ENCODE measurements at regions of chr7 and their contacts with region 1.

Region 1: GRCh38 chr7:38107486-38107893 is 70.6 kb upstream of the STARD3NL start:
- DNase-seq: no peak
- H3K4me3 ChIP-seq: no peak overlapping the region
- H3K27ac ChIP-seq: no peak overlapping the region
- H3K4me1 ChIP-seq: no peaks in the 10 kb centered on the region
- H3K27me3 ChIP-seq: no peaks in the 10 kb centered on the region
- CTCF ChIP-seq: peak; percentile 27 to 81 (median 63)
- POLR2A ChIP-seq: no peak

Region 2: GRCh38 chr7:37901236-37901827 is 206.2 kb before region 1 on chr7:
- intact Hi-C with region 1: loop called (anchors 5 kb)
- DNase-seq: no peak
- H3K4me3 ChIP-seq: no peak overlapping the region
- H3K27ac ChIP-seq: no peak overlapping the region
- H3K4me1 ChIP-seq: peaks cover 0 to 14% (median 8%) of the 10 kb centered on the region in 3 donors
- H3K27me3 ChIP-seq: no peaks in the 10 kb centered on the region
- CTCF ChIP-seq: peak in 5 of 6 experiments; percentile 16 to 40 (median 31)
- POLR2A ChIP-seq: no peak

Region 3: DNA sequence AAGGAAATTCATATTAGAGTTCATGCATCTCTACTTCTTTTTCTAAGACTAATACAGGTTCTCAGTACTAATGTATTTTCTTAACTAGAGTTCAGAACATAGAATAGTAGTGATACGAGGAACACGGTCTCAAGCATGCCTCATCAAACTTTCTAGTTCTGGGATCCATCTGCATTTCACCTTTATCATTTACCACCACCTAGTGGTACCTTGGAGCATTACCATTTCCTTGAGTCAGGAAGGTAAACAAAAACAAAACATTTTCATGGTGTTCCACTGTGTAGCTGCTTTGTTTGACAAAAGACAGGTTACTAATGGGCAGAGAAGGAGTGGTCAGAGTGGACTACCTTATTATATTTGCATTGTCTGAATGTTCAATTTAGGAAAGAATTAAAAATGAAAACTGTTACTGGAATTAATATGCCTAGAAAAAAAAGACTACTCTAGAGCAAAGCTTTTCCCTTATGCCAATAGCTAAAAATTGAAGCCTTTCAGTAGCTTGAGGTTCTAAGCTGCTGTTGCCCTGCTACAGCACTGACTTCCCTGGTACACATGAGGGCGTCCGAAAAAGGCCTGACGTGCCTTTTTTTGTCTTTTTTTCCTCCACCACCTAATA is 115.1 kb after region 1 on chr7:
- intact Hi-C with region 1: loop called (anchors 5 kb)
- DNase-seq: no peak
- H3K4me3 ChIP-seq: no peak overlapping the region
- H3K27ac ChIP-seq: peak overlapping the region in 1 of 4 donors; percentile 13
- H3K4me1 ChIP-seq: no peaks in the 10 kb centered on the region
- H3K27me3 ChIP-seq: no peaks in the 10 kb centered on the region
- CTCF ChIP-seq: peak; percentile 72 to 90 (median 88)
- POLR2A ChIP-seq: no peak